ENCODE measurements at regions of chr7 and their contacts with region 1.

Region 1: DNA sequence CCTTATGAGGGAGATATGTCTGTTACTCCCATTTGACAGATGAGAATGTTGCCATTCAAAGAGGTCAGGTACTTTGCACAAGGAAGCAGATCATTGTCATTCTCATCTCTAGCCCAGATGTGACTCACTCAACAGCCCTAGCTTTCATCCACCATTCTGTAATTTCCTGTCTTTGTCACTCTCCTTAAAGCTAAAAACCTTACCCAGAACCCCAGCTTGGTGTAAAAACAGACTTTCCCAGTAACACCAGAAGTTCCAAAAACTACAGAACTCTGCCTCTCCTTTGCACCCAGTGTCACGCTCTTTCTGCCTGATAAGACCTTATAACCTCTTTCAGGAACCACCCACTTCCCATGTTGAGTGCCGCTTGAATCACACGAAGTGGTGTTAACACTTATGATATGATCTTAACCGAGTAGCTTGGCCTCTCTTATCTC is 89.1 kb upstream of the SP4 start:
- DNase-seq: peak; percentile 57
- H3K4me3 Mint-ChIP-seq: peak overlapping the region; percentile 25
- H3K27ac Mint-ChIP-seq: peak overlapping the region; percentile 92
- H3K4me1 Mint-ChIP-seq: peaks cover 84% of the 10 kb centered on the region
- H3K27me3 Mint-ChIP-seq: no peaks in the 10 kb centered on the region

Region 2: DNA sequence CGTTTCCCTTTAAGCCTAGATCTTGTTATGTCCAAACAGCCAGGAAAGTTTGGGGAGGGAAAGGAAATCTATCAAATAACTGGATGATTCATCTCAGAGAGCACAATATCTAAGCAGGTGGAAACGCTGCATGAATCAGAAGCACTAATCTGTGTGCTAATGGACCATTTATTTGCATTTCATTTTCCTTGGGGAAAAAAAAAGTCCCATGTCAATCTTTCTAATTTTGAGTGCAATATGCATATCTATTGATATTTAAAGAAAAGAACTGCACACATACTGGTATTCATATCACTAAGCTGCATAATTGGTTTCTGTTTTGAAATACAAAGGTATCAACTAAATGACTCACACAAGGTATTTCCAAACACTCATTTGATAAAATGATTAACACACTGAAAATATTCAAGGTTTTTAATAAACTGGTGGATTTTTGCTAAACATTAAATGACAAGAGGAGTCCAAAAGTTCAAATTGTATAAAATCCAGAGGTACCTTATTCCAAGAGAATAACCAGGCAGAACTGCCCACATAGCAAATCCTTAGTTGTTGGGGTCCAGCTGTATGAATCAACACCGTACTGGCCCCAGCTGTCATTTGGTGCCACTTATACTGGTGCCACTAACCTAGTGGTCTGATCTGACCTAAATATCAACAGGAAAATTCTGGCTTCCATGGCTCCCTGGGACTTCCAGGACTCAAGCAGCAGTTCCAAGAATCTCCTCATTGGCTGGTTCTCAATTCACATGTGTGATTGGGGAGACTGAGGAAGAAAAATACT is 33.1 kb before region 1 on chr7:
- intact Hi-C with region 1: loop called (anchors 1 kb)
- DNase-seq: no peak
- H3K4me3 Mint-ChIP-seq: no peak overlapping the region
- H3K27ac Mint-ChIP-seq: no peak overlapping the region
- H3K4me1 Mint-ChIP-seq: peaks cover 18% of the 10 kb centered on the region
- H3K27me3 Mint-ChIP-seq: no peaks in the 10 kb centered on the region

Region 3: GRCh38 chr7:21317966-21318915 is 20.5 kb before region 1 on chr7:
- intact Hi-C with region 1: no loop called
- DNase-seq: no peak
- H3K4me3 Mint-ChIP-seq: no peak overlapping the region
- H3K27ac Mint-ChIP-seq: no peak overlapping the region
- H3K4me1 Mint-ChIP-seq: no peaks in the 10 kb centered on the region
- H3K27me3 Mint-ChIP-seq: peaks cover 8% of the 10 kb centered on the region

Region 4: GRCh38 chr7:21352540-21353387 is 14.0 kb after region 1 on chr7:
- intact Hi-C with region 1: loop called (anchors 1 kb)
- DNase-seq: no peak
- H3K4me3 Mint-ChIP-seq: peak overlapping the region; percentile 67
- H3K27ac Mint-ChIP-seq: peak overlapping the region; percentile 96
- H3K4me1 Mint-ChIP-seq: peaks cover 69% of the 10 kb centered on the region
- H3K27me3 Mint-ChIP-seq: no peaks in the 10 kb centered on the region

Region 5: DNA sequence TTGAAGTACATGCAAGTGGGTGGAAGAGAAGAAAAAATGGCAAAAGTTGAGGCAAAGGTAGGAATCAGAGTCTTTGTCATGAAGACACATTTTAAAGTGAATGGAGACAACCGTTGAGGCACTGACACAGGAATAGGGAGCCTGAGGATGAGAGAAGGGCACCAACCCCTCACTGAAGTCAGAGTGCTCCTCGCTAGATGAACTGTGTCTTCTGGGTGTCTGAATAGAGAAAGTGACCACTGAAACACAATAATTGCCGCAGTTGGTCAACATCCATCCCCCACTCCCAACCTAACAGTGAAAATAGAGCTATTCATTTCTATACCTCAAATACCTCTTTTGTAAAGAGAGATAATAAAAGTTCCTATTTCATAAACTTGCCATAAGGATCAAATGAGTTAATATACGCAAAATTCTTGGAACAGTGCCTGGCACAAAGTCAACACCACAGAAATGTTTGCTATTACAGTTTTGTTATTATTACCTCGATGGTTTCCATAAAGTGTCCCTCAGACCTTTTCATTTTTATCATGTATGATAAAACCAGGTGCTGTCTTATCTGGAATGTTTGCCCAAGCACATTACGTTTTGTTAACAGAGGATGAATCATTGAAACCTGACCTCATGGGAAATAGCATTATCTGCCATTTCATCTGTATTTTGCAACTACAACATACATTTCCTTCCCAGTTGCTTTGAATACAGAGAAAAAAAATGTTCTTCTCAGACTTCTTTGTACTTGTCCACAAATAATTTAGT is 27.3 kb after region 1 on chr7:
- intact Hi-C with region 1: loop called (anchors 1 kb)
- DNase-seq: no peak
- H3K4me3 Mint-ChIP-seq: peak overlapping the region; percentile 9
- H3K27ac Mint-ChIP-seq: peak overlapping the region; percentile 25
- H3K4me1 Mint-ChIP-seq: peaks cover 70% of the 10 kb centered on the region
- H3K27me3 Mint-ChIP-seq: no peaks in the 10 kb centered on the region

Region 6: GRCh38 chr7:21383227-21384220 is 44.8 kb after region 1 on chr7:
- intact Hi-C with region 1: loop called (anchors 2 kb)
- DNase-seq: no peak
- H3K4me3 Mint-ChIP-seq: peak overlapping the region; percentile 60
- H3K27ac Mint-ChIP-seq: peak overlapping the region; percentile 46
- H3K4me1 Mint-ChIP-seq: peaks cover 43% of the 10 kb centered on the region
- H3K27me3 Mint-ChIP-seq: no peaks in the 10 kb centered on the region